ENCODE measurements at regions of chr1 and their contacts with region 1.

Region 1: DNA sequence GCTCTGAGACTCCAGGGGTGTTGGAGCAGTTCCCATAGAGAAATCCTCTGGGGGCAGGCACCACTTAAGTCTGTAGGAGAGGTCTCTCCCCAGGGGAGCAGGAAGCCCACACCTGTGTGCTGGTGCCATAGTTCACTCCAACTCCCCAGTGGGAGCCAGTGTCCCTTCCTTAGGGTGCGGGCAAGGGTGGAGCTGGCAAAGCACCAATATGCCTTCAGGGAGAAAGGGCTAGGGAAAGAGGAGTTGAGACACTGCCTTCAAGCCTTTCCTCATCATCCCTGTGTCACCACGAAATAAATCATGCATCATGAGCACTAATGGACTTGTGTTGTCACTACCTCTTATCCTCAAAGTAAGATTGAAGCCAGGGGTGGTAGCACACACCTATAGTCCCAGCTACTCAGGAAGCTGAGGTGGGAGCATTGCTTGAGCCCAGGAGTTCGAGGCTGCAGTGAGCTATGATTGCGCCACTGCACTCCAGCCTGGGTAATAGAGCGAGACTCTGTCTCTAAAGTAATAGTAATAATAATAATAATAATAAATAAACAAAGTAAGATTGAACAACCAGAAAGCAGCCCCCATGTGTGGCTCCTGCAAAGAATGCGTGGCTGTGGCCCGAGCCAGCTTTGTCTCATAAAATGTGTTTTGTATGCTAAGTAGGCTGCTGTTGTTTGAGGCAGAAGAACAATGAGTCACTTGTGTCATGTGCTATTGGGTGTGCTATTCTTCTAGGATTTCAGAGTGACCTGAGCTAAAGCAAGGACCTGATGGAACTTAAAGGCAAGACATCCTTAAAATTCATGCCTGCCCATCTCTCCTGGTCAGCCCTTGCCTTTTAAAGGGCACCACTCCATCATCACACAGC is 6.7 kb upstream of the TIE1 start:
- DNase-seq: peak; percentile 72 to 83
- H3K4me3 ChIP-seq: no peak overlapping the region
- H3K27ac ChIP-seq: peak overlapping the region; percentile 73
- H3K4me1 ChIP-seq: peaks cover 49% of the 10 kb centered on the region
- H3K27me3 ChIP-seq: no peaks in the 10 kb centered on the region
- CTCF ChIP-seq: no peak

Region 2: GRCh38 chr1:43307463-43308158 is 13.5 kb after region 1 on chr1:
- CTCF ChIA-PET with region 1: no interaction called
- POLR2A ChIA-PET with region 1: interaction called, 12 read pairs
- intact Hi-C with region 1: no loop called
- DNase-seq: no peak
- H3K4me3 ChIP-seq: no peak overlapping the region
- H3K27ac ChIP-seq: no peak overlapping the region
- H3K4me1 ChIP-seq: no peaks in the 10 kb centered on the region
- H3K27me3 ChIP-seq: no peaks in the 10 kb centered on the region
- CTCF ChIP-seq: no peak

Region 3: GRCh38 chr1:43321331-43321891 is 27.3 kb after region 1 on chr1:
- CTCF ChIA-PET with region 1: no interaction called
- POLR2A ChIA-PET with region 1: interaction called, 17 read pairs
- intact Hi-C with region 1: loop called (anchors 5 kb)
- DNase-seq: peak; percentile 54 to 60
- H3K4me3 ChIP-seq: no peak overlapping the region
- H3K27ac ChIP-seq: no peak overlapping the region
- H3K4me1 ChIP-seq: no peaks in the 10 kb centered on the region; the same call in 1 of the 2 replicates
- H3K27me3 ChIP-seq: no peaks in the 10 kb centered on the region
- CTCF ChIP-seq: no peak

Region 4: GRCh38 chr1:44217809-44218410 is 923.8 kb after region 1 on chr1:
- CTCF ChIA-PET with region 1: no interaction called
- POLR2A ChIA-PET with region 1: no interaction called
- intact Hi-C with region 1: no loop called
- DNase-seq: peak; percentile 44 to 78
- H3K4me3 ChIP-seq: no peak overlapping the region
- H3K27ac ChIP-seq: no peak overlapping the region
- H3K4me1 ChIP-seq: peaks cover 8% of the 10 kb centered on the region; the same call in 1 of the 2 replicates
- H3K27me3 ChIP-seq: no peaks in the 10 kb centered on the region
- CTCF ChIP-seq: peak; percentile 95

Measured in PC-9 (cell line).